Endothelial cell of umbilical vein (primary cell): ENCODE measurements at regions of chr12 and their contacts with region 1.

Region 1: GRCh38 chr12:120356567-120357030 is 12.4 kb downstream of the MSI1 start:
- DNase-seq: peak; percentile 74
- H3K4me3 ChIP-seq: no peak overlapping the region
- H3K27ac ChIP-seq: no peak overlapping the region
- H3K4me1 ChIP-seq: no peaks in the 10 kb centered on the region
- H3K27me3 ChIP-seq: peaks cover 0 to 2% of the 10 kb centered on the region in 2 experiments
- CTCF ChIP-seq: peak; percentile 89 to 91
- POLR2A ChIP-seq: no peak

Region 2: DNA sequence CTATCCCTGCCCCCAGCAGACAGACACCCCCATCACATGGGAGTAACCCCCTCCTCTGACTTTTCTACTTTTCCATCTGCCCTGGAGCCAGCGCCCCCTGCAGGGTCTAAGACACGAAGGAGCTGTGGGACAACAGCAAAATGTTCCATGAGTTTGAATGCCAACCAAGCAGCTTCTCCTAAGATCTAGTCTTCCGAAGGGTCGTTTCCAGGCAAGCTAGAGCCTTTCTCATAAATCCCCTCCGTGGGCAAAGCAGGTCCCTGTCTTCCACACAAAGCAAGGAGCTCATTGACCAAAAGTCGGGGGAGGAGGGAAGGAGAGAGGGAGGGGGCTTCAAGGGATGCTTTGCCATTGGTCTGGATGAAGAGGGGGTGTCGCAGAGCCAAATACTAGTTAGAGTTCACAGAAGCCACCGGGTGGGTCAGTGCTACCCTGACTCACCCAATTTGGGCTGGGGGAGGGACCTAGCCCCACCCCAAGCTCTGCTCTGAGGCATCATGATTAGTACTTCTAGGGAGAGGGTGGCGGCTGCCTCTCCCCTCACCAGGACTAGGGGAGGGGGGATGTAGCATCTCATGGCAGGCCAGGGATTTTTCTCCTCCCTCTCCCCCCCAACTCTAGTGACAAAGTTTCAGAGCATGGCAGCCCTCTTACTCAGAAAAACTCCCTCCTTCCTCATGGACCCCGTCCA is 10.8 kb after region 1 on chr12:
- CTCF ChIA-PET with region 1: interaction called, 10 read pairs
- POLR2A ChIA-PET with region 1: no interaction called
- dilution Hi-C with region 1: no loop called
- intact Hi-C with region 1: no loop called
- DNase-seq: no peak
- H3K4me3 ChIP-seq: no peak overlapping the region
- H3K27ac ChIP-seq: no peak overlapping the region
- H3K4me1 ChIP-seq: no peaks in the 10 kb centered on the region
- H3K27me3 ChIP-seq: peaks cover 47 to 54% of the 10 kb centered on the region in 2 experiments
- CTCF ChIP-seq: peak; percentile 36 to 51
- POLR2A ChIP-seq: no peak

Region 3: DNA sequence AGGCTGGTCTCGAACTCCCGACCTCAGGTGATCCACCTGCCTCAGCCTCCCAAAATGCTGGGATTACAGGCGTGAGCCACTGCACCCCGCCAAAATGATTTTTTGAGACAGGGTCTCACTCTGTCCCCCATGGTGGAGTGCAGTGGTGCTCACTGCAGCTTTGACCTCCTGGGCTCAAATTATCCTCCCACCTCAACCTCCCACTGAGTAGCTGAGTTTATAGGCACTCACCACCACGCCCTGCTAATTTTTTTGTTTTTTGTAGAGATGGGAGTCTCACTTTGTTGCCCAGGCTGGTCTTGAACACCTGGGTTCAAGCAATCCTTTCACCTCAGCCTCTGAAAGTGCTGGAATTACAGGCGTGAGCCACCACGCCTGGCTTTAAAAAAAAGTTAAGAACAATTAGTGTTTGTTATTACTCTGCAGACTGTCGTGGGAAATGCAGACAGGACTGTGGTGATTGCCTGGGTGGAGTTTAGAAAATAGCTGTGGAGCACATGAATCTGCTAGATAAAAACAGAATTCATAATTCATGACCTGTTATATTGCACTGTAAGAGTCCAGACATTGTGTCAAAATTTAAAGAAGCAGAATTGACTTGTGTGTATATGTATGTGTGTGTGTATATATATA is 72.1 kb after region 1 on chr12:
- CTCF ChIA-PET with region 1: interaction called, 18 read pairs
- POLR2A ChIA-PET with region 1: no interaction called
- dilution Hi-C with region 1: no loop called
- intact Hi-C with region 1: loop called (anchors 1 kb)
- DNase-seq: no peak
- H3K4me3 ChIP-seq: no peak overlapping the region
- H3K27ac ChIP-seq: no peak overlapping the region
- H3K4me1 ChIP-seq: no peaks in the 10 kb centered on the region
- H3K27me3 ChIP-seq: peaks cover 0 to 3% of the 10 kb centered on the region in 2 experiments
- CTCF ChIP-seq: no peak
- POLR2A ChIP-seq: no peak

Region 4: GRCh38 chr12:120437754-120438494 is 81.3 kb after region 1 on chr12 and contains the start of gene COX6A1:
- CTCF ChIA-PET with region 1: interaction called, 4 read pairs
- POLR2A ChIA-PET with region 1: no interaction called
- dilution Hi-C with region 1: no loop called
- intact Hi-C with region 1: loop called (anchors 2 kb)
- DNase-seq: peak; percentile 91
- H3K4me3 ChIP-seq: peak within 1 kb of the TSS; percentile 48 to 76 (median 49)
- H3K27ac ChIP-seq: peak within 1 kb of the TSS; percentile 2
- H3K4me1 ChIP-seq: peaks cover 14% of the 10 kb centered on the region
- H3K27me3 ChIP-seq: no peaks in the 10 kb centered on the region
- CTCF ChIP-seq: no peak
- POLR2A ChIP-seq: peak; percentile 93
- total RNA-seq, gene COX6A1: 299 and 302 TPM in 2 replicates

Region 5: GRCh38 chr12:120457133-120457532 is 100.5 kb after region 1 on chr12:
- CTCF ChIA-PET with region 1: interaction called, 3 read pairs
- POLR2A ChIA-PET with region 1: interaction called, 10 read pairs
- dilution Hi-C with region 1: no loop called
- intact Hi-C with region 1: no loop called
- DNase-seq: no peak
- H3K4me3 ChIP-seq: no peak overlapping the region
- H3K27ac ChIP-seq: no peak overlapping the region
- H3K4me1 ChIP-seq: no peaks in the 10 kb centered on the region
- H3K27me3 ChIP-seq: no peaks in the 10 kb centered on the region
- CTCF ChIP-seq: peak in 1 of 2 donors; percentile 32
- POLR2A ChIP-seq: no peak

Region 6: GRCh38 chr12:120469450-120470149 is 113.0 kb after region 1 on chr12 and contains the start of gene SRSF9:
- CTCF ChIA-PET with region 1: interaction called, 7 read pairs
- POLR2A ChIA-PET with region 1: no interaction called
- dilution Hi-C with region 1: no loop called
- intact Hi-C with region 1: loop called (anchors 1 kb)
- DNase-seq: peak; percentile 96
- H3K4me3 ChIP-seq: peak within 1 kb of the TSS; percentile 54 to 90 (median 78)
- H3K27ac ChIP-seq: peak within 1 kb of the TSS; percentile 68
- H3K4me1 ChIP-seq: peaks cover 5% of the 10 kb centered on the region
- H3K27me3 ChIP-seq: no peaks in the 10 kb centered on the region
- CTCF ChIP-seq: peak; percentile 96 to 99
- POLR2A ChIP-seq: peak; percentile 87
- total RNA-seq, gene SRSF9: 226 and 238 TPM in 2 replicates

Region 7: DNA sequence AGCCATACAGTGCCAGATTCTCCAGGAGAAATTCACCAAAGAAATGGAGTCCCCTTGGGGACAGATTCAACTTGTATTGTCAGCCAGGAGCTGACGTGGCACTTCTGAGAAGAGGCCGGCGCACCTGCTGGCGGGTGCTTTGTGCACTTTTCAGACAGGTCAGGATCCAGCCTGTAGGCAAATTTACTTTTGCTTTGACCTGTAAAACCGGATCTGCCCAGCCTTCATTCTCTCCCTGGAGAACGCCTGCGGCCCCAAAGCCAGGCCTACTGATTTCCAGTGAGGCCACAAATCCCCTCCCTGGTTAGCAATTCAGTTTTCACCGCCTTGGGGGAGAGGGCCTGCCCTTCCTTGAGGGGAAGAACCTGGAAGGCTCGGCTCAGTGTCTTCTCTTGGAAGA is 870.7 kb after region 1 on chr12:
- CTCF ChIA-PET with region 1: no interaction called
- POLR2A ChIA-PET with region 1: no interaction called
- dilution Hi-C with region 1: no loop called
- intact Hi-C with region 1: no loop called
- DNase-seq: no peak
- H3K4me3 ChIP-seq: no peak overlapping the region
- H3K27ac ChIP-seq: no peak overlapping the region
- H3K4me1 ChIP-seq: no peaks in the 10 kb centered on the region
- H3K27me3 ChIP-seq: no peaks in the 10 kb centered on the region
- CTCF ChIP-seq: no peak
- POLR2A ChIP-seq: no peak